ENCODE measurements at regions of chr3 and their contacts with region 1.

Region 1: GRCh38 chr3:132034486-132035464 is at the start of gene CPNE4:
- DNase-seq: peak; percentile 62 to 73 (median 67)
- ATAC-seq: peak; percentile 87 to 98 (median 94)
- H3K4me3 ChIP-seq: no peak within 1 kb of the TSS
- H3K27ac ChIP-seq: no peak within 1 kb of the TSS
- H3K4me1 ChIP-seq: no peaks in the 10 kb centered on the region
- H3K27me3 ChIP-seq: peaks cover 4 to 31% of the 10 kb centered on the region in 2 donors
- CTCF ChIP-seq: peak; percentile 34 to 75 (median 57)
- POLR2A ChIP-seq: no peak
- total RNA-seq, gene CPNE4: not detected

Region 2: GRCh38 chr3:131794766-131795388 is 239.9 kb before region 1 on chr3:
- intact Hi-C with region 1: loop called in 1 of 2 experiments (anchors 10 kb)
- DNase-seq: no peak
- ATAC-seq: peak; percentile 80 to 89 (median 84)
- H3K4me3 ChIP-seq: no peak overlapping the region
- H3K27ac ChIP-seq: no peak overlapping the region
- H3K4me1 ChIP-seq: no peaks in the 10 kb centered on the region
- H3K27me3 ChIP-seq: no peaks in the 10 kb centered on the region
- CTCF ChIP-seq: peak; percentile 54 to 77 (median 72)
- POLR2A ChIP-seq: no peak

Region 3: GRCh38 chr3:131907796-131908195 is 127.0 kb before region 1 on chr3:
- intact Hi-C with region 1: no loop called
- DNase-seq: no peak
- ATAC-seq: no peak
- H3K4me3 ChIP-seq: no peak overlapping the region
- H3K27ac ChIP-seq: no peak overlapping the region
- H3K4me1 ChIP-seq: no peaks in the 10 kb centered on the region
- H3K27me3 ChIP-seq: no peaks in the 10 kb centered on the region
- CTCF ChIP-seq: no peak
- POLR2A ChIP-seq: no peak

Region 4: GRCh38 chr3:132135628-132136333 is 101.0 kb after region 1 on chr3:
- intact Hi-C with region 1: no loop called
- DNase-seq: no peak
- ATAC-seq: no peak
- H3K4me3 ChIP-seq: no peak overlapping the region
- H3K27ac ChIP-seq: no peak overlapping the region
- H3K4me1 ChIP-seq: no peaks in the 10 kb centered on the region
- H3K27me3 ChIP-seq: no peaks in the 10 kb centered on the region
- CTCF ChIP-seq: no peak
- POLR2A ChIP-seq: no peak

Region 5: DNA sequence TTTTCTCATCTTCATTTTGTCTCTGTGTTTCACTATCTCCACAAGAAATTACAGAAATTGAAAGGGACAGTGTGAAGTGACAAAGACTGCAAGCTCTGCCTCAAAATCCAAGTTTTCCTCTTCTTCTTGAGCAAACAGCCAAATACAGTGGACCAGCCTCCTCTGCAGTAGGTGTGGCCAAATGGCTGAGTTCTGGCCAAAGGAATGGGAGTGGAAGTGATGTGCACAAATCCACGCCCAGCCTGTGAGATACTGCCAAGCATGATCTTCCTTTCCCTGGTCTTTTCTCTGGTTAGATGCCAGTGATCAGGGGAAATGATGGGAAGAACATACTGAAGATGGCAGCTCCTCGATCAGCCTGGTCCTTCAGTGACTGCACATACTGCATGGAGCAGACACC is 111.1 kb after region 1 on chr3:
- intact Hi-C with region 1: no loop called
- DNase-seq: no peak
- ATAC-seq: no peak
- H3K4me3 ChIP-seq: no peak overlapping the region
- H3K27ac ChIP-seq: no peak overlapping the region
- H3K4me1 ChIP-seq: no peaks in the 10 kb centered on the region
- H3K27me3 ChIP-seq: no peaks in the 10 kb centered on the region
- CTCF ChIP-seq: no peak
- POLR2A ChIP-seq: no peak

Region 6: GRCh38 chr3:132180337-132180791 is 145.6 kb after region 1 on chr3:
- intact Hi-C with region 1: loop called in 1 of 2 experiments (anchors 10 kb)
- DNase-seq: no peak
- ATAC-seq: peak; percentile 65 to 73 (median 72)
- H3K4me3 ChIP-seq: no peak overlapping the region
- H3K27ac ChIP-seq: no peak overlapping the region
- H3K4me1 ChIP-seq: no peaks in the 10 kb centered on the region
- H3K27me3 ChIP-seq: no peaks in the 10 kb centered on the region
- CTCF ChIP-seq: peak; percentile 38 to 54 (median 48)
- POLR2A ChIP-seq: no peak